Dendritic cell treated with granulocyte-macrophage colony-stimulating factor and Interleukin-4, amounts not matched to agents 40 ng/mL and 50 ng/mL, for 4 days (primary cell): ENCODE measurements at regions of chr4 and their contacts with region 1.

Region 1: GRCh38 chr4:121696581-121697461 is at the start of gene ANXA5:
- H3K4me3 Mint-ChIP-seq: peak within 1 kb of the TSS; percentile 100
- H3K27ac Mint-ChIP-seq: peak within 1 kb of the TSS; percentile 99
- H3K4me1 Mint-ChIP-seq: peaks cover 38% of the 10 kb centered on the region
- H3K27me3 Mint-ChIP-seq: peaks cover 25% of the 10 kb centered on the region

Region 2: DNA sequence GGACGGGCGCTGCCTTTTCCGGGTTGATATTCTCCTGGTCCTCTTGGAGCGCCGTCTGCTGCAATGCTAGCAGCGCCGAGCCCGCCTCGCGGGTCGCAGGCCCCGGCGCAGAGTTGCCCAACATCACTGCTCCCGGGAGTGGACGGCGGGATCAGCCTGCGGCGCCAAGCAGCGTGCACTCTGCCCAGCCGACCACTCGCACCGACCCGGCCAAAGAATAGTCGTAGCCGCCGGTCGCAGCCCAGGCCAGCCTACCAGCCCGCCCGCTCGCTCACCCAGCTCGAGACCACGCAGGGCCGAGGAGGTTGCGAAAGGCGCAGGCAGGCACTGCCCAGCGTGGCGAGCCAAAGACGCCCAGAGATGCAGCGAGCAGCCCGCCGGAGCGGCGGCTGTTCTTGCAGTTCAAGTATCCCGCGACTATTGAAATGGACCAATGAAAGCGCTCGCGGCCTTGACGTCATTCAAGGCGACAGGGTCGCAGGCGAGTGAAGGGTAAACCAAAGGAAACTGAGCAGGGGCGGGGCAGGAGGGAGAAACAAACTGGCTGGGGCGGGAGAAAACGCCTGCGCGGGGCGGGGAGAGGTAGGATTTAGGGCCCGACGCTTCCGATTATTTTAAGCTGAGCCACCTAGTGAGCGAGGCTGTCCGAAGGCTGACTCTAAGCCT is 126.8 kb after region 1 on chr4 and contains the start of gene CCNA2:
- intact Hi-C with region 1: loop called (anchors 5 kb)
- H3K4me3 Mint-ChIP-seq: peak within 1 kb of the TSS; percentile 96
- H3K27ac Mint-ChIP-seq: peak within 1 kb of the TSS; percentile 75
- H3K4me1 Mint-ChIP-seq: peaks cover 19% of the 10 kb centered on the region
- H3K27me3 Mint-ChIP-seq: no peaks in the 10 kb centered on the region